Head of caudate nucleus (tissue), 42 donors: ENCODE measurements at regions of chr3 and their contacts with region 1.

Region 1: DNA sequence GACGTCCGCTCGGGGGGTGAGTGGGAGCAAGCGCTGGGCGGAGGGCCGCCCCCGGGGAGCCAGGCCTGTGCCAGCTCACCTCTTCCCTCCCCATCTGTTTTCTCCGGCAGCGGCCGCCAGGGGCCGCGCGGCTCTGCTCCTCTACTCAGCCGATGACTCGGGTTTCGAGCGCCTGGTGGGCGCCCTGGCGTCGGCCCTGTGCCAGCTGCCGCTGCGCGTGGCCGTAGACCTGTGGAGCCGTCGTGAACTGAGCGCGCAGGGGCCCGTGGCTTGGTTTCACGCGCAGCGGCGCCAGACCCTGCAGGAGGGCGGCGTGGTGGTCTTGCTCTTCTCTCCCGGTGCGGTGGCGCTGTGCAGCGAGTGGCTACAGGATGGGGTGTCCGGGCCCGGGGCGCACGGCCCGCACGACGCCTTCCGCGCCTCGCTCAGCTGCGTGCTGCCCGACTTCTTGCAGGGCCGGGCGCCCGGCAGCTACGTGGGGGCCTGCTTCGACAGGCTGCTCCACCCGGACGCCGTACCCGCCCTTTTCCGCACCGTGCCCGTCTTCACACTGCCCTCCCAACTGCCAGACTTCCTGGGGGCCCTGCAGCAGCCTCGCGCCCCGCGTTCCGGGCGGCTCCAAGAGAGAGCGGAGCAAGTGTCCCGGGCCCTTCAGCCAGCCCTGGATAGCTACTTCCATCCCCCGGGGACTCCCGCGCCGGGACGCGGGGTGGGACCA is 632 bp upstream of the CRELD1 start:
- DNase-seq: peak; percentile 57 to 93 (median 80)

Region 2: DNA sequence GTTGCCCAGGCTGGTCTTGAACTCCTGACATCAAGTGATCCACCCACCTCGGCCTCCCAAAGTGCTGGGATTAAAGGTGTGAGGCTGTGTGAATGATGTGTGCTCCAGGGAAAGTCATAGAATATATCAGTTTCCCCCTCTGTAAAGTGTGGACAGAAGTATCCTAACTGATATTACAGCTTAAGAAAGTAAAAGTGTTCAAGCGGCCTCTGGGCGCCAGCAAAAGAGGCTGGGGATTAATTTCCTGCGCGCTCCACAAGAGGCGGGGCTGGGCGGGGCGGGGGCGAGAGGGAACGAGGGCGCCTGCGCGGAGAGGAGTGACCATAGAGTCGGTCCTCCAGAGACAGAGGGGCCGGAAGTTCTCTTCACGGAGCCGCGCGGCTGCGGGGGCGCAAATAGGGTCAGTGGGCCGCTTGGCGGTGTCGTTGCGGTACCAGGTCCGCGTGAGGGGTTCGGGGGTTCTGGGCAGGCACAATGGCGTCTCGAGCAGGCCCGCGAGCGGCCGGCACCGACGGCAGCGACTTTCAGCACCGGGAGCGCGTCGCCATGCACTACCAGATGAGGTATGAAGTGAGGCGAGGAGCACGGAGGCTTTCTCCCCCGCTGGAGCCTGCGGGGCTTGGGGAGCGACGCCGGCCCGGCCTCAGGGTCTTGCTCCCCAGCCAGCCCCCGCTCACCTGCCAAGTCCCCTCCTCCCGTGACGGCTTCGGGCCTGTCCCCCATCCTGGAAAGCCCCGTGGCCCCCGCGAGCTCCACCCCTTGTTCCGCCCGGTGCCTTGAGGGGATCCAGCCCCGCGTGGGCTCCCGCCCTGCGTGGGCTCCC is 42.5 kb before region 1 on chr3 and contains the start of gene JAGN1:
- intact Hi-C with region 1: loop called (anchors 5 kb)
- DNase-seq: peak; percentile 76 to 96 (median 90)